ENCODE measurements at regions of chr21 and their contacts with region 1.

Region 1: DNA sequence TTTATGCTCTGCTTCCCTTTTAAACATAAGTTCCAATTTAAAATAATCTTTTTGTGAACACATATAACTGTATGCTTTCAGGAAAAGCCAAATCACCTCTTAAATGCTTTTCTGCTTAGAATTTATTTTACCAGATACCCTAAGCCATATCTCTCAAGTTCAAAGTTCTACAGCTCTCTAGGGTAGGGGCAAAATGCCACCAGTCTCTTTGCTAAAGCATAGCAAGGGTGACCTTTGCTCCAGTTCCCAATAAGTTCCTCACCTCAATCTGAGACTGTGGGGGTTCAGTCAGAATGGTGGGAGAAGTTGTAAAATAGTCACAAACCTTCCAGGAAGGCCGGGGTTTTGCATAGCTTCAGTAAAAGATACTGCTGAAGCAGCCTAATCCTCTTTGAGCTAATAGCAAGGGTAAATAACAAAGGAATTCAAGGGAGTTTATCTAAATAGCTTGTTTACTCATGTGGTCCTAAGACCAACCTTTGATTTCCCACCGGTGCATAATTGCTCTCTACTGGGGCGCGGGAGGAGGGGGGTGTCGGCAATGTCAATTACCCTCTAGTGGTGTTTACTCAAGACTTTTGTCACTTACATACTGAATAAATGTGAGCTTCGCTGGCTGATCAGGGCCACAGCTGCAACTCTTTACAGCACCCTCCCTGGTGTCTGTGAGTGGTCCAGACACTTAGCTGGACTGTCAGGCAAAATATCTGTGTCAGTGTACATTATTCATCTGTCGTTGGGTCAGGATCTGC is 1376.2 kb downstream of the NCAM2 start:
- DNase-seq: peak; percentile 84 to 93
- H3K4me3 ChIP-seq: no peak overlapping the region
- H3K4me3 Mint-ChIP-seq: peak overlapping the region; percentile 49
- H3K27ac Mint-ChIP-seq: peak overlapping the region; percentile 32
- H3K4me1 ChIP-seq: peaks cover 23% of the 10 kb centered on the region
- H3K4me1 Mint-ChIP-seq: peaks cover 16% of the 10 kb centered on the region
- H3K27me3 ChIP-seq: no peaks in the 10 kb centered on the region
- H3K27me3 Mint-ChIP-seq: no peaks in the 10 kb centered on the region
- CTCF ChIP-seq: no peak

Region 2: GRCh38 chr21:22201126-22201525 is 173.3 kb before region 1 on chr21:
- CTCF ChIA-PET with region 1: no interaction called
- POLR2A ChIA-PET with region 1: no interaction called
- intact Hi-C with region 1: loop called (anchors 2 kb)
- DNase-seq: peak in 1 of 2 experiments; percentile 19
- H3K4me3 ChIP-seq: no peak overlapping the region
- H3K4me3 Mint-ChIP-seq: no peak overlapping the region
- H3K27ac Mint-ChIP-seq: no peak overlapping the region
- H3K4me1 ChIP-seq: peaks cover 17% of the 10 kb centered on the region
- H3K4me1 Mint-ChIP-seq: no peaks in the 10 kb centered on the region
- H3K27me3 ChIP-seq: no peaks in the 10 kb centered on the region
- H3K27me3 Mint-ChIP-seq: no peaks in the 10 kb centered on the region
- CTCF ChIP-seq: no peak

Region 3: GRCh38 chr21:22288885-22289499 is 85.4 kb before region 1 on chr21:
- CTCF ChIA-PET with region 1: no interaction called
- POLR2A ChIA-PET with region 1: no interaction called
- intact Hi-C with region 1: loop called (anchors 1 kb)
- DNase-seq: peak in 1 of 2 experiments; percentile 20
- H3K4me3 ChIP-seq: no peak overlapping the region
- H3K4me3 Mint-ChIP-seq: peak overlapping the region; percentile 47
- H3K27ac Mint-ChIP-seq: peak overlapping the region; percentile 76
- H3K4me1 ChIP-seq: peaks cover 21% of the 10 kb centered on the region
- H3K4me1 Mint-ChIP-seq: peaks cover 12% of the 10 kb centered on the region
- H3K27me3 ChIP-seq: no peaks in the 10 kb centered on the region
- H3K27me3 Mint-ChIP-seq: no peaks in the 10 kb centered on the region
- CTCF ChIP-seq: no peak

Region 4: DNA sequence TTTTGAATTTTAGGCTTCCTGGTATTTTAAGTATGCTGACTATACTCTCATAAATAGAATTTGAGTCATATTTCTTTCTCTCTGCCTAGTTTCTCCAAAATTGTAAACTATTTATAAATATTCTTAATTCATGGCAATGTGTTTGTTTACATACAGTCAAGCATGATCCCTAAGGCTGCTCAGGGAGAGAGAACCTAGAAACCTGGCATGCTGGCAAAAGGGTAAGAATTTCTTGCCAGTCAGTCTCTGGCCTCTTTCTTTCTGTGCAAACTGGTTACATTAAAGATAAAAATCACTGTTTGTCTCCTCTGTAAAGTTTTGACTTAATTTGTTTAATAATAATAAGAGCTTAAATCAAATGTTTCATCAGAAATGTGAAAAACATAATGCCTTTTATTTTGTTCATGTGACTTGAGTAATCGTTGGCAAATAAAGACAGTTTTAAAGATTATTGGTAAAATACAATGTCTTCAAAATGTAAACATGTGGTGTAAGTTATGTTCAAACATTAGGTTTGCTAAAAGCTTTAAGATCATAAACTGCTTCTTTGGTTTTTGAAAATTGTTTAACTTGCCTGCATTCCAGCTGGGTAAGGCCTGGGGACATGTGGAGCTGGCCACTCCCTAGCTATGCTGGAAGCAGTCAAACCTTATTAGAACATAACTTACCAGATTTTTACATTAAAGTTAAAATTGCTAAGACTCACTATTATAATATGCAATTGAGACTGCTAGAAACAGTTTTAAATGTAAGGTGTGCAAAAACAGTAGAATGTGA is 25.5 kb after region 1 on chr21:
- CTCF ChIA-PET with region 1: interaction called, 5 read pairs
- POLR2A ChIA-PET with region 1: interaction called, 10 read pairs
- intact Hi-C with region 1: loop called (anchors 1 kb)
- DNase-seq: peak; percentile 59 to 67
- H3K4me3 ChIP-seq: no peak overlapping the region
- H3K4me3 Mint-ChIP-seq: no peak overlapping the region
- H3K27ac Mint-ChIP-seq: peak overlapping the region; percentile 39
- H3K4me1 ChIP-seq: peaks cover 45% of the 10 kb centered on the region
- H3K4me1 Mint-ChIP-seq: peaks cover 18% of the 10 kb centered on the region
- H3K27me3 ChIP-seq: no peaks in the 10 kb centered on the region
- H3K27me3 Mint-ChIP-seq: no peaks in the 10 kb centered on the region
- CTCF ChIP-seq: no peak

Region 5: GRCh38 chr21:22597660-22598255 is 223.4 kb after region 1 on chr21:
- CTCF ChIA-PET with region 1: no interaction called
- POLR2A ChIA-PET with region 1: no interaction called
- intact Hi-C with region 1: no loop called
- DNase-seq: no peak
- H3K4me3 ChIP-seq: no peak overlapping the region
- H3K4me3 Mint-ChIP-seq: no peak overlapping the region
- H3K27ac Mint-ChIP-seq: no peak overlapping the region
- H3K4me1 ChIP-seq: no peaks in the 10 kb centered on the region
- H3K4me1 Mint-ChIP-seq: no peaks in the 10 kb centered on the region
- H3K27me3 ChIP-seq: no peaks in the 10 kb centered on the region
- H3K27me3 Mint-ChIP-seq: no peaks in the 10 kb centered on the region
- CTCF ChIP-seq: no peak